Vagina (tissue), 2 donors: ENCODE measurements at regions of chr1 and their contacts with region 1.

Region 1: DNA sequence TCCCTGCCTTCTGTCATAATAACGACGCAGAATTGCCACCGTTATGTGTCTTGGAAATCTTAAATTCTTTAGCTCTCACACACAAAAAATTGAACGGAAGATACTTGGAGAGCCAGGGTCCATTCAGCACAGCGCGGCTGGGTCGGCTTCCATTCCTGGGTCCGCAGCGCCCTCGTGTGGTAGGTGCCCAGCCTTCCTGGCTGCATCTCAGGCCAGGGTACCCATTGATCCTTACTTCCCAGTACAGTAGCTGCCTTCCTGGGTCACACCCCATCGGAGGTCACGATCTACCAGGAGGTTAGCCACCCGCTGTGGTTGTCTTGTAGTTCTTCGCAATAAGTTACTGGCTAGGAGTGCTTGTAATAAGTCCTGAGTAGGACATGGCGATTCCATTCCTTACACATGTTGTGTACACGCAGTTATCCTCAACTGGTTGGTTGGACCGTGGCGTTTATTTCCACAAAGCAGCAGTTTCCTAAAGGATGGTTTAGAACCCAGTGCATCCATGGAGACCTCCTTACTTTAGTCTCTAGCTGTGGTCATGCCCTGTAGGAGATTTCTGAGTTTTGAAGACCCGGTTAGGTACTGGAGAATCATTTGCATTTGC is 9.9 kb upstream of the MTARC1 start:
- DNase-seq: no peak
- H3K4me3 ChIP-seq: no peak overlapping the region
- H3K27ac ChIP-seq: no peak overlapping the region
- H3K4me1 ChIP-seq: no peaks in the 10 kb centered on the region
- H3K27me3 ChIP-seq: no peaks in the 10 kb centered on the region
- CTCF ChIP-seq: peak; percentile 65 to 74 (median 68)
- POLR2A ChIP-seq: no peak

Region 2: GRCh38 chr1:220677251-220677650 is 99.6 kb before region 1 on chr1:
- intact Hi-C with region 1: loop called (anchors 5 kb)
- DNase-seq: no peak
- H3K4me3 ChIP-seq: no peak overlapping the region
- H3K27ac ChIP-seq: no peak overlapping the region
- H3K4me1 ChIP-seq: no peaks in the 10 kb centered on the region
- H3K27me3 ChIP-seq: no peaks in the 10 kb centered on the region
- CTCF ChIP-seq: no peak
- POLR2A ChIP-seq: no peak